Activated CD8-positive, alpha-beta T cell treated with anti-CD3 and anti-CD28 coated beads for 36 hours (primary cell): ENCODE measurements at regions of chr4 and their contacts with region 1.

Region 1: DNA sequence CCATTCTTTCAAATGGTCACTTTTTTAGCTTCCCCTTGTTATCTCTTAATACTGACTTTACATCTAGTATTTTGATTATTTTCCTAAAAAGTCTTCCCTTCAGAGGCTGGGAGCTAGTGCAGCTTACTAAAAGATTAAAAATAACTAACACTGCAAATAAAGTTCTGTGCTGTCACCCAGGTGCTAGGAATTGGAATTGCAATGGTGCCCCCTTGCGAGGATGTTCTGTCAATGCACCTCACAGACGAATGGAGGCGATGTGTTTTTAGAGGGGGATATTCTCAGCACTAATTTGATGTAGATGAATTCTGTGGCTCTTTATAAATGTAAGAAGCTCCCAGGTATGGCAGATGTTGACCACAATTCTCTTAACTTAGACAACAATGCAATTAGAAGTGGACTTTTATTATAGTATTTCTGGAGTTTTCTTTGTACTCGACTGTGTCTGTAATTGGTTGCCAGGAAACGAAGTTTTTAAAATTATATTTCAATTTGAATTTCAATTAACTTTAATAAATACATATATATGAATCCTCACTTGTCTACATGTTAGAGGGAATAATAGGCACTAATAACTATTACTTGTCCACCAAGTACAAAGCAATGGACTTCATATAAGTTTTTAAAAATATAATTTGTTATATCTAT is 22.0 kb upstream of the SMIM31 start:
- DNase-seq: peak; percentile 59
- ATAC-seq: peak; percentile 74
- H3K4me3 Mint-ChIP-seq: no peak overlapping the region
- H3K27ac Mint-ChIP-seq: no peak overlapping the region
- H3K4me1 Mint-ChIP-seq: no peaks in the 10 kb centered on the region
- H3K27me3 Mint-ChIP-seq: peaks cover 6% of the 10 kb centered on the region
- CTCF ChIP-seq: peak; percentile 84

Region 2: DNA sequence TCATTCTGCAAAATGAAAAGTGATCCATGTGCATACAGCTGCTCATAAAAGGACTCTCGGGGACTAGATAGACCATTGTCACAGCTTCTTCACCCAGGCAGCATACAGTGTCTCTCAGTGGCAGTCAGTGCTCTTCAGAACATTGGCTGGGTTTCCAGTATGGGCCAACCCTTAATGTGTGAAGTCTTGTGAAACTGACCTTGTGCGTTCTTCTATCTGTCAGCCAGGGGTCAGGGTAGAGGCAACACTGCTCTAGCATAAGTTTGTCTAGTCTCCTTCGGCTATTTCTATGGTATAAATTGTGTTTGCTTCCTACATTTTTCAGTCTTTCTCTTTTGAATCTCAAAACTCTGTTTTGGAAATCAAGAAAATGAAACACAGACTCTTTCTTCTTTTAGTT is 15.1 kb before region 1 on chr4:
- CTCF ChIA-PET with region 1: interaction called, 31 read pairs
- POLR2A ChIA-PET with region 1: no interaction called
- intact Hi-C with region 1: no loop called
- DNase-seq: no peak
- ATAC-seq: no peak
- H3K4me3 Mint-ChIP-seq: no peak overlapping the region
- H3K27ac Mint-ChIP-seq: no peak overlapping the region
- H3K4me1 Mint-ChIP-seq: no peaks in the 10 kb centered on the region
- H3K27me3 Mint-ChIP-seq: peaks cover 3% of the 10 kb centered on the region
- CTCF ChIP-seq: no peak

Region 3: DNA sequence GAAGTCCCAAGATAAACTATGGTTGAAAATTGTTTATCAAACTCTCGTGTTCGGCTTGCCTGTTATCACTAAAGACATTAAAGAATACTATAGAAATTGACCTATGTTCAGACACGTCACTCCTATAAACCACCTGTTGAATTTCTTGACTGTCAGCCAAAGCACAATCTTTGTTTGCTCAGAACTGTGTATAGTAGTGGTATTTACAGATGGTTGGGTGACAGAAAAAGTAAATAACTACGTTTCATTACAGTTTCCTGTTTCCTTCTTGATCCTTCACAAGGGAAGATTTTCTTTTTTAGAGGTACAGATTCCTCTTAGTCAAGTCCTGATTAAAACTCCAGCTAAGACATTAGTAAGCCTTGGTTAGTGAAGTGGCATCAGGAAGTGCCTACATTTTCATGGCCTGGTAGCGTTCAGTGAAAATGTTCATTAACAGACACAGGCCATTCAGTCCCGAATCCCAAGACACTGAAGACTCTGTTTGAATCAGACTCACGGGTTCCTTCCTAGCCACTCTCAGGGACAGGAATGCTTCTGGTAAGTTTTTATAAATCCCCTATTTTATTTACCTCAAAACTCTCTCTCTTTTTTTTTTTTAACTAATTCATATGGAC is 22.0 kb after region 1 on chr4 and contains the start of gene SMIM31:
- CTCF ChIA-PET with region 1: no interaction called
- POLR2A ChIA-PET with region 1: no interaction called
- intact Hi-C with region 1: no loop called
- DNase-seq: no peak
- ATAC-seq: no peak
- H3K4me3 Mint-ChIP-seq: no peak within 1 kb of the TSS
- H3K27ac Mint-ChIP-seq: no peak within 1 kb of the TSS
- H3K4me1 Mint-ChIP-seq: no peaks in the 10 kb centered on the region
- H3K27me3 Mint-ChIP-seq: peaks cover 1% of the 10 kb centered on the region
- CTCF ChIP-seq: no peak
- total RNA-seq, gene SMIM31: not detected